ENCODE measurements at regions of chr19 and their contacts with region 1.

Region 1: GRCh38 chr19:18846862-18847548 is 15.2 kb downstream of the UPF1 start:
- DNase-seq: peak; percentile 59 to 65 (median 64)
- H3K4me3 ChIP-seq: peak overlapping the region in 1 of 3 experiments; percentile 68
- H3K4me3 Mint-ChIP-seq: no peak overlapping the region
- H3K27ac ChIP-seq: peak overlapping the region; percentile 21 to 83
- H3K27ac Mint-ChIP-seq: peak overlapping the region in 6 of 7 donors; percentile 73 to 98 (median 80)
- H3K4me1 ChIP-seq: peaks cover 36 to 51% of the 10 kb centered on the region in 2 donors
- H3K4me1 Mint-ChIP-seq: peaks cover 72% of the 10 kb centered on the region
- H3K27me3 ChIP-seq: no peaks in the 10 kb centered on the region
- H3K27me3 Mint-ChIP-seq: peaks cover 0 to 2% (median 0%) of the 10 kb centered on the region in 3 donors
- CTCF ChIP-seq: peak; percentile 94

Region 2: GRCh38 chr19:18450931-18451845 is 395.8 kb before region 1 on chr19:
- intact Hi-C with region 1: loop called (anchors 5 kb)
- DNase-seq: peak; percentile 63 to 74 (median 72)
- H3K4me3 ChIP-seq: no peak overlapping the region
- H3K4me3 Mint-ChIP-seq: no peak overlapping the region
- H3K27ac ChIP-seq: no peak overlapping the region
- H3K27ac Mint-ChIP-seq: peak overlapping the region in 1 of 7 donors; percentile 73
- H3K4me1 ChIP-seq: no peaks in the 10 kb centered on the region
- H3K4me1 Mint-ChIP-seq: no peaks in the 10 kb centered on the region
- H3K27me3 ChIP-seq: no peaks in the 10 kb centered on the region
- H3K27me3 Mint-ChIP-seq: peaks cover 0 to 6% (median 1%) of the 10 kb centered on the region in 3 donors
- CTCF ChIP-seq: peak; percentile 96

Region 3: DNA sequence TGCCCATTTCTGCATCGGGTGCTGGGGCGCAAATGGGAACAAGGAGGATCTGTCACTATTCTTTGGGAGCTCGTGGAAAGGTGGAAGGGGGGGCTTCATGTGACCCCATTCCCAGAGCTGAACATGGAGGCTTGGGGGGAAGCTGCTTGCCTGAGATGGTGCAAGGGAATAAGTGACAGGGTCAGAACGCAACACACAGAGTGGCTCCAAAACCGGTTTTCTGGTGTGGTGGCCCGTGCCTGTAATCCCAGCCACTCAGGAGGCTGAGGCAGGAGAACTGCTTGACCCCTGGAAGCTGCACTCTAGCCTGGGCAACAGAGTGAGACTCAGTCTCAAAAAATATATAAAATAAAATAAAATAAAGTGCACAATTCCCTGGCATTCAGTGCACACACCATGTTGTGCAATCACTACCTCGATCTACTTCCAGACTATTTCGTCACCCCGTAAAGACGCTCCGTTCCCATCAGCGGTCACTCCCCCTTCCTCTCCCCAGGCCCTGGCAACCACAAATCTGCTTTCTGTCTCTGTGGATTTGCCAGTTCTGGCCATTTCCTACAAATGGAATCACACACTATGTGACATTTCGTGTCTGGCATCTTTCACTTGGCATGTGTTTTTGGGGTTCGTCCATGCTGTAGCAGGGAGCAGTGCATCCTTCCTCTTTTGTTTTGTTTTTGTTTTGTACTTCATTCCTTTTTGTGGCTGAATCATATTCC is 37.7 kb before region 1 on chr19:
- intact Hi-C with region 1: no loop called
- DNase-seq: peak; percentile 42 to 56 (median 53)
- H3K4me3 ChIP-seq: peak overlapping the region; percentile 18 to 66 (median 31)
- H3K4me3 Mint-ChIP-seq: peak overlapping the region; percentile 69 to 87
- H3K27ac ChIP-seq: no peak overlapping the region
- H3K27ac Mint-ChIP-seq: peak overlapping the region in 2 of 7 donors; percentile 7 to 56
- H3K4me1 ChIP-seq: peaks cover 10% of the 10 kb centered on the region in 2 donors
- H3K4me1 Mint-ChIP-seq: peaks cover 12% of the 10 kb centered on the region
- H3K27me3 ChIP-seq: peaks cover 0 to 4% of the 10 kb centered on the region in 2 donors
- H3K27me3 Mint-ChIP-seq: peaks cover 9 to 38% (median 31%) of the 10 kb centered on the region in 3 donors
- CTCF ChIP-seq: no peak

Region 4: GRCh38 chr19:18859676-18860301 is 12.8 kb after region 1 on chr19:
- intact Hi-C with region 1: no loop called
- DNase-seq: no peak
- H3K4me3 ChIP-seq: no peak overlapping the region
- H3K4me3 Mint-ChIP-seq: no peak overlapping the region
- H3K27ac ChIP-seq: no peak overlapping the region
- H3K27ac Mint-ChIP-seq: peak overlapping the region in 2 of 7 donors; percentile 6 to 44
- H3K4me1 ChIP-seq: peaks cover 4 to 8% of the 10 kb centered on the region in 2 donors
- H3K4me1 Mint-ChIP-seq: peaks cover 6% of the 10 kb centered on the region
- H3K27me3 ChIP-seq: no peaks in the 10 kb centered on the region
- H3K27me3 Mint-ChIP-seq: peaks cover 0 to 2% (median 0%) of the 10 kb centered on the region in 3 donors
- CTCF ChIP-seq: no peak